ENCODE measurements at regions of chr4 and their contacts with region 1.

Region 1: DNA sequence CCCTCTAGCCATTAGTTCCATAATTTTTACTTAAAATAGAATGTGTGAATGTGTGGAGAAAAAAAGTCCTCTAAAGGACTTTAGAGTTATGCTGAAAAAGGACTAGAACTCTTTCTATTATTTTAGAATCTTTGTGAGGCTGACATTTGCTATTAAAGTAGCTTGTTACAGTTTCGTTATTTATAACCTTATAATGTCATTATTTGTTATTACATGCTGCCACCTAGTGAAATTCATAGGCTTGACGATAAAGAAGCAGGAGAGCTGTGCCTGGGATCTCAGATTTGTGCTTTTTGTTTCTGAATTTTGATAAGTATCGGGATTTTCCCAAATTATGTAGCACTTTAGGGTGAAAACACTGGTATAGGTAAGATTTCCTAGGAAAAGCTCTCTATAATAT is 38.5 kb upstream of the TAPT1 start:
- DNase-seq: no peak
- H3K4me3 ChIP-seq: no peak overlapping the region
- H3K27ac ChIP-seq: no peak overlapping the region
- H3K4me1 ChIP-seq: no peaks in the 10 kb centered on the region
- H3K27me3 ChIP-seq: no peaks in the 10 kb centered on the region
- CTCF ChIP-seq: peak in 2 of 3 donors; percentile 36 to 40
- EP300 ChIP-seq: no peak
- POLR2A ChIP-seq: no peak

Region 2: DNA sequence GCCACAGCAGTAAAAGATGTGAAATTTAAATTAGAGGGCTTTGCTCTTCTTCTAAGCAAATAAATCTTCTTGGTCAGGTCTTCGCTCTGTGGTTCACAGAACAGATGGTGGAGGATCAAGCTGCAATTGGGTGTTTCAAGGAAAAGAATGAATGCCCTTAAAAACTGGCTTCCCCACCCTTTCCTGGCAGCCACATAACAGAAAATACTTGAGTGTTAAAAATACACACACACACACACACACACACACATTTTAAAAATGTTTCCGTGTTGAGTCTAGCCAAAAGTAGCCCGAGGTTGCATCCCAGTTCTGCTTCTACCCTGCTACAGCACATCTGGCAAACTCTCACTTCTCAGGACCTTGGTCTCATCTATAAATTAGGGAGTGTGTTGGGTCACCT is 245.1 kb before region 1 on chr4:
- intact Hi-C with region 1: loop called in 3 of 4 experiments (anchors 5 to 10 kb)
- DNase-seq: no peak
- H3K4me3 ChIP-seq: no peak overlapping the region
- H3K27ac ChIP-seq: no peak overlapping the region
- H3K4me1 ChIP-seq: no peaks in the 10 kb centered on the region
- H3K27me3 ChIP-seq: no peaks in the 10 kb centered on the region
- CTCF ChIP-seq: no peak
- EP300 ChIP-seq: no peak
- POLR2A ChIP-seq: no peak

Region 3: GRCh38 chr4:16026160-16026761 is 238.5 kb before region 1 on chr4:
- intact Hi-C with region 1: loop called in 2 of 4 experiments (anchors 5 to 10 kb)
- DNase-seq: no peak
- H3K4me3 ChIP-seq: no peak overlapping the region
- H3K27ac ChIP-seq: no peak overlapping the region
- H3K4me1 ChIP-seq: no peaks in the 10 kb centered on the region
- H3K27me3 ChIP-seq: no peaks in the 10 kb centered on the region
- CTCF ChIP-seq: peak; percentile 60 to 79 (median 71)
- EP300 ChIP-seq: no peak
- POLR2A ChIP-seq: no peak

Region 4: DNA sequence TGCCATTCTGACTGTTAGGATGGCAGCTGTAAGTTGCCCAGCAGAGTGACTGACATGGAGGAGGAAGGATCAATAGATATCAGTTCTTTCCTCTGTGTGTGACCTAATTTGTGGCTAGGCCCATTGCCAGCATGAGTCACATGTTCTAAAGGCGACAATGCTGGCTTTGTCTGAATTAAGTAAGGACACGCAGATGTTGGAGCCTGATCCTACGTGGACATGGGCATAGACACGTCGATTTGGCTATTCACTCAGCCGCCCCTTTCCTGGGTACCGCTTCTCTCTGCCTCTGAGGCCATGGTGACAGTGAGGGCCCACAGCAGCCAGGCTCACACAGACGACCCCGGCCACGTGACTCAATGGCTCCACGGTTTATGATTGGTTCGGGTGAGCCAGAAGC is 197.3 kb before region 1 on chr4:
- intact Hi-C with region 1: no loop called
- DNase-seq: no peak
- H3K4me3 ChIP-seq: no peak overlapping the region
- H3K27ac ChIP-seq: no peak overlapping the region
- H3K4me1 ChIP-seq: no peaks in the 10 kb centered on the region
- H3K27me3 ChIP-seq: no peaks in the 10 kb centered on the region
- CTCF ChIP-seq: no peak
- EP300 ChIP-seq: no peak
- POLR2A ChIP-seq: no peak

Region 5: GRCh38 chr4:16196478-16197393 is 68.1 kb before region 1 on chr4:
- intact Hi-C with region 1: loop called in 1 of 4 experiments (anchors 5 kb)
- DNase-seq: no peak
- H3K4me3 ChIP-seq: no peak overlapping the region
- H3K27ac ChIP-seq: no peak overlapping the region
- H3K4me1 ChIP-seq: peaks cover 4% of the 10 kb centered on the region
- H3K27me3 ChIP-seq: no peaks in the 10 kb centered on the region
- CTCF ChIP-seq: no peak
- EP300 ChIP-seq: no peak
- POLR2A ChIP-seq: no peak

Region 6: DNA sequence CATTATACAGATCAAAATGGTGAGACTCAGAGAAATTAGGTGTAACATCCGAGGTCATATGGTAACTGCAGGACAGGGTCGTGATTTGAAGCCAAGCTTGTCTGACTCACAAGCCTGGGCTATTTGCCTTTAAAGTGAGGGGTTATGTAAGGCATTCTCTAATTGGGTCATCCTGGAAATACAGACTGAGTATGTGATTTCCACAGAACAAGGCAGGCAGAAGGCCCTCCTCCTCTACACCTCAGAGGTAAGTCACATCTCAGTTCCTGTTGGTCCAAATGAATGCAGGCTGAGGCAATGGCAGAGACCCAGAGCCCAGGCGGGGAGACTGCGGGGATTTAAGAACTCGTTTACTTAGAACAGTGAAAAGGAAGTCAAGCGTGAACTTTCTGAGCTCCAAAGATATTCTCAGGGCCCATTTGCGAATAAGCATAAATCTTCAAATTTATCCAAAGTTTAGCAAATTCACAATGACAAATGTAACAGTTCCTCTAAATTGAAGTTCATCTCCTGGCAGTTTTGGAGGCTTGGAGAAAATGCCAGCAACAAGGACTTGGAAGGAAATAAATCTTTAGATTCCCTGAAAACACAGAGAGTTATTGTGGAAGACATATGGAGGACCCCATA is 480.3 kb after region 1 on chr4:
- intact Hi-C with region 1: no loop called
- DNase-seq: peak in 2 of 5 donors; percentile 12 to 53
- H3K4me3 ChIP-seq: no peak overlapping the region
- H3K27ac ChIP-seq: no peak overlapping the region
- H3K4me1 ChIP-seq: peaks cover 3% of the 10 kb centered on the region
- H3K27me3 ChIP-seq: no peaks in the 10 kb centered on the region
- CTCF ChIP-seq: no peak
- EP300 ChIP-seq: no peak
- POLR2A ChIP-seq: no peak

Measured in ovary (tissue), 10 donors.